ENCODE measurements at regions of chr2 and their contacts with region 1.

Region 1: GRCh38 chr2:61065715-61066709 is at the start of gene SANBR:
- DNase-seq: peak; percentile 77 to 90
- H3K4me3 ChIP-seq: peak within 1 kb of the TSS; percentile 77 to 95
- H3K27ac ChIP-seq: peak within 1 kb of the TSS; percentile 76 to 79
- H3K4me1 ChIP-seq: peaks cover 0 to 9% (median 3%) of the 10 kb centered on the region in 4 donors
- H3K27me3 ChIP-seq: no peaks in the 10 kb centered on the region
- CTCF ChIP-seq: peak in 1 of 2 experiments; percentile 5

Region 2: GRCh38 chr2:61016808-61017555 is 49.0 kb before region 1 on chr2:
- intact Hi-C with region 1: loop called (anchors 10 kb)
- DNase-seq: peak; percentile 63 to 85
- H3K4me3 ChIP-seq: peak overlapping the region; percentile 79 to 84
- H3K27ac ChIP-seq: peak overlapping the region; percentile 92 to 93
- H3K4me1 ChIP-seq: peaks cover 0 to 36% (median 16%) of the 10 kb centered on the region in 4 donors
- H3K27me3 ChIP-seq: no peaks in the 10 kb centered on the region
- CTCF ChIP-seq: no peak

Region 3: DNA sequence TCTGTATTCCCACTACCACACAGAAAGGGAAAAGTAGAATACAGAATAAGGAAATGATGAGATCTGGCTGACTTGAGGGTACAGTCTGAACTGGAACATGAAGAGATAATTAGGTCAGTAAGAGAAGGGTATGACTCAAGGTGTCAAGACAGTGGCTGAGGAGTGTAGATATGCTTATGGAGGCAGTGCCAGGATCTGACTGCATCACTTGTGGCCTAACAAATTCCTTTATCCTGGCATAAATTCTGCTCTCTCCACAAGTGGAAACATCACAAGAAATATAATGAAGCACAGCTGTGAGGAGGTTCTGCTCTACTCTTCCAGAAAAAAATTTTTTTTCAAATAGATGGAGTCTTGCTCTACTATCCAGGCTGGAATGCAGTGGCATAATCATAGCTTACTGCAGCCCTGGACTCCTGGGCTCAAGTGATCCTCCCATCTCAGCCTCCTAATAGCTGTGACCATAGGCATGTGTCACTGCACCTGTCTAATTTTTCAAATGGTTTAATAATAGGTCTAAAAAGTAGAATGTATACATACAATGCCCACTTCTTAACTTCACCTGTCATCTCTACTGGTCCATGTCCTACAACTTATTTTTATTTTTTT is 181.3 kb after region 1 on chr2:
- intact Hi-C with region 1: no loop called
- DNase-seq: no peak
- H3K4me3 ChIP-seq: no peak overlapping the region
- H3K27ac ChIP-seq: no peak overlapping the region
- H3K4me1 ChIP-seq: no peaks in the 10 kb centered on the region
- H3K27me3 ChIP-seq: no peaks in the 10 kb centered on the region
- CTCF ChIP-seq: no peak

Region 4: GRCh38 chr2:61970807-61971556 is 905.0 kb after region 1 on chr2:
- intact Hi-C with region 1: no loop called
- DNase-seq: no peak
- H3K4me3 ChIP-seq: peak overlapping the region; percentile 47 to 48
- H3K27ac ChIP-seq: peak overlapping the region; percentile 60 to 70
- H3K4me1 ChIP-seq: peaks cover 0 to 39% (median 10%) of the 10 kb centered on the region in 4 donors
- H3K27me3 ChIP-seq: no peaks in the 10 kb centered on the region
- CTCF ChIP-seq: no peak

Region 5: DNA sequence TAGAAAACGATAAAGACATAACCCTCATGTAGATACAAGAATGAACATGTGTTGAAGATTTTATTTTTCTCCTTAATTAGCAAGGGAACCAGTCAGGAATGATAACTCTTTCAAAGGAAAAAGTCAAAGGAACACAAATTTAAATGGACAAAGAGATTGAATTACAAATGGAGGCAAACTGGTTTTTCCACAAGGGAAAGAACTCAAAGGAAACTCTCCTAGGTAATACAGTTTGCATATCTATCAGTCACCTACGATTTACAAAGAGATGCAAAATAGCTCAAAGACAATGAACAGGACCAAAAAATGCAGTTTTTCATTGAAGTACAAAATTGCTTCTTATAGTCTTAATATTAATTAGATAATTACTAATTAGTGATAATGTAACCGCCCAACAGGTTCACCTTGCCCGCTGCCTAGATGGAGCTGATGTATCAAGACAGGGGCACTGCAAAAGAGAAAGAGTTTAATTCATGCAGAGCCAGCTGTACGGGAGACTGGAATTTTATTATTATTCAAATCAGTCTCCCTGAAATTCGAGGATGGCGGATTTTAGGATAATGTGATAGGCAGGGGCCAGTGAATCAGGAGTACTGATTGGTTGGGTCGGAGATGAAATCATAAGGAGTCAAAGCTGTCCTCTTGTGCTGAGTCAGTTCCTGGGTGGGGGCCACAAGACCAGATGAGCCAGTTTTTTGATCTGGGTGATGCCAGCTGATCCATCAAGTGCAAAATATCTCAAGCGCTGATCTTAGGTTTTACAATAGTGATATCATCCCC is 1288.9 kb after region 1 on chr2:
- intact Hi-C with region 1: no loop called
- DNase-seq: no peak
- H3K4me3 ChIP-seq: no peak overlapping the region
- H3K27ac ChIP-seq: no peak overlapping the region
- H3K4me1 ChIP-seq: no peaks in the 10 kb centered on the region
- H3K27me3 ChIP-seq: no peaks in the 10 kb centered on the region
- CTCF ChIP-seq: no peak

Measured in tibial artery (tissue), 4 donors.